ENCODE measurements at regions of chr5 and their contacts with region 1.

Region 1: GRCh38 chr5:33936004-33936380 is 194 bp upstream of the RXFP3 start:
- DNase-seq: peak in 4 of 5 donors; percentile 20 to 26 (median 22)
- H3K4me3 ChIP-seq: no peak overlapping the region
- H3K4me3 Mint-ChIP-seq: no peak overlapping the region
- H3K27ac ChIP-seq: no peak overlapping the region
- H3K27ac Mint-ChIP-seq: no peak overlapping the region
- H3K4me1 ChIP-seq: no peaks in the 10 kb centered on the region
- H3K4me1 Mint-ChIP-seq: peaks cover 0 to 8% (median 3%) of the 10 kb centered on the region in 4 donors
- H3K27me3 ChIP-seq: peaks cover 9% of the 10 kb centered on the region
- H3K27me3 Mint-ChIP-seq: peaks cover 32 to 37% of the 10 kb centered on the region in 2 donors

Region 2: GRCh38 chr5:31993165-31993961 is 1942.6 kb before region 1 on chr5:
- CTCF ChIA-PET with region 1: no interaction called
- POLR2A ChIA-PET with region 1: no interaction called
- intact Hi-C with region 1: no loop called
- DNase-seq: no peak
- H3K4me3 ChIP-seq: no peak overlapping the region
- H3K4me3 Mint-ChIP-seq: no peak overlapping the region
- H3K27ac ChIP-seq: no peak overlapping the region
- H3K27ac Mint-ChIP-seq: no peak overlapping the region
- H3K4me1 ChIP-seq: no peaks in the 10 kb centered on the region
- H3K4me1 Mint-ChIP-seq: peaks cover 0 to 7% (median 3%) of the 10 kb centered on the region in 4 donors
- H3K27me3 ChIP-seq: no peaks in the 10 kb centered on the region
- H3K27me3 Mint-ChIP-seq: peaks cover 0 to 4% of the 10 kb centered on the region in 2 donors

Region 3: DNA sequence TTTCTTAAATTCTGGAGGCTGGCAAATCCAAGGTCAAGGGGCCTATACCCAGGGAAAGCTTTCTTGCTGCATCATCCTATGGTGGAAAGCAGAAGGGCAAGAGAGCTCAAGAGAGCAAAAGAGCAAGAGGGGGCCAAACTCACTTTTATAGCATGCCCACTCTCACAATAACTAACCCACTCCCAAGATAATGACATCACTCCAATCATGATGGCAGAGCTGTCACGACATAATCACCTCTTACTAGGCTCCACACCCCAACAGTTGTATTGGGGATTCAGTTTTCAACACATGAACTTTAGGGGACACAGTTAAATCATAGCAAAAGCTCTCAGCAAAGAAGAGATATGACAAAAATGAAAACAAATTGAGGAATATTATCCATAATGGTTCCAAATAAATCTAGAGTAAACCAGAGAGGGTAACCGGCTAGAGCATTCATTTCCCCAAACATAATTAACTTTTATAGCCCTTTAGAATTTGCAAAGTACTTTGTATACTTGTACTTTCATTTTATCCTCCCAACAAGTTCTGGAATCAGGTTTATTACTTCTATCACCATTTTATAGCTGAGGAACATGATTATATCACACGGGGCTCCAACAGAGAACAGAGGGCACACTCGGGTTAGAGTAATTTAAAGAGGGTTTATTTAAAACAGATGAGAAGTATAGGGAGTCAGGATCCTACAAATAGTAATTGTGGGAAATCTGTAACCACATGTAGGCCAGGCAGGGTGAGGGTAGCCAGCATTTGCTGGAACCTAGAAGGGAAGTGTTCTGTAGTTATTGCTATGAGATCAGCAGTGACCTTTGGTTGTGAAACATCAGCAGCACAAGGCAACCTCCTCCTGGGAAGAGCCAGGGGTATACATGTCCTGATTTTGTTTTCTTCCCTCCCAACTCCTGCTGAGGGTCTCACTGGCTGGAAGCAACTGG is 502.4 kb before region 1 on chr5:
- CTCF ChIA-PET with region 1: interaction called, 71 read pairs
- POLR2A ChIA-PET with region 1: no interaction called
- intact Hi-C with region 1: no loop called
- DNase-seq: no peak
- H3K4me3 ChIP-seq: no peak overlapping the region
- H3K4me3 Mint-ChIP-seq: no peak overlapping the region
- H3K27ac ChIP-seq: no peak overlapping the region
- H3K27ac Mint-ChIP-seq: no peak overlapping the region
- H3K4me1 ChIP-seq: peaks cover 7% of the 10 kb centered on the region
- H3K4me1 Mint-ChIP-seq: peaks cover 7 to 11% (median 9%) of the 10 kb centered on the region in 4 donors
- H3K27me3 ChIP-seq: no peaks in the 10 kb centered on the region
- H3K27me3 Mint-ChIP-seq: peaks cover 2% of the 10 kb centered on the region in 2 donors

Region 4: DNA sequence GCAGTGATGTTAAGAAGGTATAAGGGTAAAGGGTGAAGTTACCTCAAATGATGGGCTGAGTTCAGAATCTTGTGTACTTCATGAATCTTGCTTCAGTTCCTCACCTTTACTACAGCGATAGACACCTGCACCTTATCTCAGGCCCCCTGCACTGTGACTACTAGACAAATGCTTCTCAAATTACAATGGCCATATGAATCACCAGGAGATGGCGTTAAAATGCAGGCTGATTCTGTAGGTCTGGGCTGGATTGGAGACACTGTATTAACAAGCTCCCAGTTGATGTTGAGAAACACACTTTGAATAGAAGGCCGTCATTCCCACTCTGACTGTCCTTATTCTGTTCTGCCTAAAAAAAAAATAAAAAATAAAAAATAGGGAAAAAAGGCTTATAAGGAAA is 465.4 kb before region 1 on chr5:
- CTCF ChIA-PET with region 1: interaction called, 10 read pairs
- POLR2A ChIA-PET with region 1: no interaction called
- intact Hi-C with region 1: loop called (anchors 1 kb)
- DNase-seq: no peak
- H3K4me3 ChIP-seq: no peak overlapping the region
- H3K4me3 Mint-ChIP-seq: no peak overlapping the region
- H3K27ac ChIP-seq: no peak overlapping the region
- H3K27ac Mint-ChIP-seq: peak overlapping the region in 1 of 7 donors; percentile 26
- H3K4me1 ChIP-seq: no peaks in the 10 kb centered on the region
- H3K4me1 Mint-ChIP-seq: no peaks in the 10 kb centered on the region
- H3K27me3 ChIP-seq: no peaks in the 10 kb centered on the region
- H3K27me3 Mint-ChIP-seq: no peaks in the 10 kb centered on the region

Region 5: DNA sequence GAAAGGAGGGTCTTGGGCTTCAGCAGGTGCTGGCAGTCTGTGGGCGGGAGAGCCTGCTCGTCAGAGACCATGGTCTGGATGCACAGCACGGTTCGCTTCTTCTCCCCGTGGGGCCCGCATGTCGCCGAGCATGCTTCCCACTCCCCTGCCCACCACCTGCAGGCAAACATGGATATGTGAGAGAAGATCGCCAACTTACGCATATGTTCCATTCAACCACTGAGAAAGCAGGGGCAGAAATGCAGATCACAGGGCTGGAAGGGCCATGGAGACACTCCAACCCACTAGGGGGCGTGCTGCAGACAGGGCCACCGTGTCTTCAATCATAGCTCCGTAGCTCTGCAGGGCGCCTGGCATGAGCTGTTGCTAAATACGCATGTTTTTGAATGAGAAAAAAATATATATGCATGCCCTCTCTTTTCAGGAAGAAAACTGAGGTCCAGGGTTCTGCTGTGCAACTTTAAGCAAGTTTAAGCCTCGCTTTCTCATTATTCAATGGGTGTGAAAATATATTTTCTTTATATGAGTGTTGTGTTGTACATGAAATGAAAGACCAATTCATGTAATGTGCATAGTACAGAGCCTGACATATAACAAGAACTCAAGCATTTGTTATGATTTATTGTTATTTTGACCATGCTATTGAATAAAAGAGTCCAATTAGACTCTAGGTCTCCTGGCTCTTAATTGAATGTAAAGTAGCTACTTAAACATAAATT is 347.2 kb before region 1 on chr5:
- CTCF ChIA-PET with region 1: interaction called, 49 read pairs
- POLR2A ChIA-PET with region 1: no interaction called
- intact Hi-C with region 1: loop called (anchors 1 kb)
- DNase-seq: peak in 4 of 5 donors; percentile 9 to 21 (median 13)
- H3K4me3 ChIP-seq: no peak overlapping the region
- H3K4me3 Mint-ChIP-seq: no peak overlapping the region
- H3K27ac ChIP-seq: no peak overlapping the region
- H3K27ac Mint-ChIP-seq: no peak overlapping the region
- H3K4me1 ChIP-seq: no peaks in the 10 kb centered on the region
- H3K4me1 Mint-ChIP-seq: no peaks in the 10 kb centered on the region
- H3K27me3 ChIP-seq: no peaks in the 10 kb centered on the region
- H3K27me3 Mint-ChIP-seq: peaks cover 0 to 5% of the 10 kb centered on the region in 2 donors

Region 6: DNA sequence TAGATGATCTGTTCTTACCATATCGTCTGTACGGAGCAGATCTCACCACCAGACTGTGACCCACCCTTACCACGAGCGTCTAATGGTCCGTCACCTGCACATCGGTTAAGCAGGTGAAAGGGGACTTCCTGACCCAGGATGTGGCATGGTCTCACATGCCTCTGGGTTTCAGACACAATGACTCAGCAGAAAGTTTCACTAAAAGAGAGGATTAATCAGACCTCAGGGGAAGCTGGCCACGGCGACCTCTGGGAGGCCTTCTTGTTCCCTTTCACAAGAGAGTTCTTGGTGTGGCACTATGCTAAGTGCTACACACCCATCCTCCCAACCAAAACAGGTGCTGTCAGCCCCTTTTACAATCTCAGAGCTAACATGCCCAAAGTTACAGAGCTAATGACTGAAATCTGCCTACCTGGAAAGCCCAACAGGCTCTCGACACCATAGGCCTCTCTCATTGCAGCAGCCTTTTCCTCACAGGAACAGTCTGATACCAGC is 85.8 kb before region 1 on chr5:
- CTCF ChIA-PET with region 1: interaction called, 6 read pairs
- POLR2A ChIA-PET with region 1: no interaction called
- intact Hi-C with region 1: loop called (anchors 5 kb)
- DNase-seq: peak; percentile 15 to 71 (median 36)
- H3K4me3 ChIP-seq: no peak overlapping the region
- H3K4me3 Mint-ChIP-seq: peak overlapping the region in 7 of 8 donors; percentile 11 to 67 (median 37)
- H3K27ac ChIP-seq: no peak overlapping the region
- H3K27ac Mint-ChIP-seq: peak overlapping the region; percentile 10 to 90 (median 77)
- H3K4me1 ChIP-seq: peaks cover 10% of the 10 kb centered on the region
- H3K4me1 Mint-ChIP-seq: peaks cover 7 to 10% (median 9%) of the 10 kb centered on the region in 4 donors
- H3K27me3 ChIP-seq: no peaks in the 10 kb centered on the region
- H3K27me3 Mint-ChIP-seq: no peaks in the 10 kb centered on the region

Region 7: GRCh38 chr5:33969572-33970452 is 33.8 kb after region 1 on chr5:
- CTCF ChIA-PET with region 1: interaction called, 10 read pairs
- POLR2A ChIA-PET with region 1: no interaction called
- intact Hi-C with region 1: no loop called
- DNase-seq: peak in 4 of 5 donors; percentile 8 to 20 (median 12)
- H3K4me3 ChIP-seq: no peak overlapping the region
- H3K4me3 Mint-ChIP-seq: no peak overlapping the region
- H3K27ac ChIP-seq: no peak overlapping the region
- H3K27ac Mint-ChIP-seq: peak overlapping the region in 1 of 7 donors; percentile 35
- H3K4me1 ChIP-seq: no peaks in the 10 kb centered on the region
- H3K4me1 Mint-ChIP-seq: peaks cover 2 to 12% (median 7%) of the 10 kb centered on the region in 4 donors
- H3K27me3 ChIP-seq: no peaks in the 10 kb centered on the region
- H3K27me3 Mint-ChIP-seq: no peaks in the 10 kb centered on the region